ENCODE measurements at regions of chr5 and their contacts with region 1.

Region 1: GRCh38 chr5:149035372-149035790 is 27.5 kb downstream of the SH3TC2 start:
- DNase-seq: peak; percentile 83
- H3K4me3 Mint-ChIP-seq: no peak overlapping the region
- H3K27ac Mint-ChIP-seq: no peak overlapping the region
- H3K4me1 Mint-ChIP-seq: peaks cover 35% of the 10 kb centered on the region
- H3K27me3 Mint-ChIP-seq: no peaks in the 10 kb centered on the region

Region 2: DNA sequence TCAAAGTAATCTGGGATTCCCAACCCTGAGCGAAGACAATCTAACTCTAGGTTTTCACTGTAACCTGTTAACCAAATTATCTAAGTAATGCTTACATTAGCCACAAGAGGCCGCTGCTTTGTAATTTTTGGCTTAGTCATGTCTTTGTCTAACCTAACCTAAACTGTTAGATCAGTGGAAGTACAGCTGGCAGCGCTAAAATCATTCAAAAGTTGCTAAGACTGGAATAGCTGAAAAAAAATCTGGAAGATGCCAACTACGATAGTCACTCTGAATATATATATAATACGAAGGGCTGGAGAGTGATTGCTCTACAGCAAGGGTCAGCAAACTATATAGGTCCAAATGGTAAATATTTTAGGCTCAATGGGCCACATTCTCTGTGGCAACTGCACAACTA is 591.4 kb before region 1 on chr5:
- CTCF ChIA-PET with region 1: interaction called, 6 read pairs
- POLR2A ChIA-PET with region 1: no interaction called
- intact Hi-C with region 1: loop called (anchors 10 kb)
- DNase-seq: peak; percentile 27
- H3K4me3 Mint-ChIP-seq: no peak overlapping the region
- H3K27ac Mint-ChIP-seq: no peak overlapping the region
- H3K4me1 Mint-ChIP-seq: no peaks in the 10 kb centered on the region
- H3K27me3 Mint-ChIP-seq: no peaks in the 10 kb centered on the region

Region 3: DNA sequence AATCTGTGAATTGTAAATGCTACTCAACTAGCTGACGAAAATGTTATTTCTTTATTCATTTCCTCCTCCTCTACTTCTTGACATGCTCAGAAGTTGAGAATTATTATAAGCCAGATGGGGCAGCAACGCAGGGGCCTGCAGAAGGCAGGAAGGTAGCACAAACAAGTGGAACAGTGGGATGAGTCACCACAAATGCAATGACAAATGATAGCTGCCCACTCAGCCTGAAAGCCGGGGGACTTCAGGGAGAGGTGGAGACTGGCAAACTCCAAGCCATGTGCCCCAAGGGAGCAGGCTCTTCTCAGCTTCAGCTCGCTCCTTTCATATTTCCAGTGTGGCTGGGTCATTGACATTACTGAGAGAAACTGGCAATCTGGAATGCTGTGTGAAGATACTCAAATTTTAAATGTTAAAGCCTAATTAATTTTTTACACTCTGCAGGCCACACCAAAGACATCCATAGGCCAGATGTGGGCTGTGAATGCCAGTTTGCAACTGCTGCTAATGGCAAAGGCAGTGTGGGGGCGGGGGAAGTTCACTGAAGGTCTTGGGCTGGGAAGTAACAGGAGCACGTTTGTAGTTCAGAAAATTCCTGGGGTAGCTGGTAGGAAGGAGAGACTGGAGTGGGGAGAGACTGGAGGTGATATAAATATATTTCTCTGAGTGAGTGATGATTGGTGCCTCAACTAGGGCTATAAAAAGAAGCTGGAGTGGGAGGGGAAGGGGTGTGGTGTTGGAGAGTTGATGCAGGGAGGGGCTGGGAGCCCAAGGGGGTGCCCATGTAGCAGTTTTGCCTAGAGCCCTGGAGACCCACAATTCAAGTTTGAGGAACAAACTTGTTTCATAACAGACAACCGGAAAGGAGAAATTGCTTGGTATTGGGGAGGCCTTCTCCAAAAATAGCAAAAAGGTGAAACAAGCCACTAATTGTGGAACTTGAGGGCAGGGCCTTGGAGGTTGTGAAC is 229.8 kb before region 1 on chr5:
- CTCF ChIA-PET with region 1: no interaction called
- POLR2A ChIA-PET with region 1: no interaction called
- intact Hi-C with region 1: loop called (anchors 5 kb)
- DNase-seq: peak; percentile 70
- H3K4me3 Mint-ChIP-seq: no peak overlapping the region
- H3K27ac Mint-ChIP-seq: peak overlapping the region; percentile 16
- H3K4me1 Mint-ChIP-seq: peaks cover 62% of the 10 kb centered on the region
- H3K27me3 Mint-ChIP-seq: peaks cover 15% of the 10 kb centered on the region

Region 4: GRCh38 chr5:148957591-148958202 is 77.7 kb before region 1 on chr5:
- CTCF ChIA-PET with region 1: interaction called, 52 read pairs
- POLR2A ChIA-PET with region 1: no interaction called
- intact Hi-C with region 1: loop called (anchors 2 kb)
- DNase-seq: peak; percentile 60
- H3K4me3 Mint-ChIP-seq: no peak overlapping the region
- H3K27ac Mint-ChIP-seq: no peak overlapping the region
- H3K4me1 Mint-ChIP-seq: no peaks in the 10 kb centered on the region
- H3K27me3 Mint-ChIP-seq: peaks cover 2% of the 10 kb centered on the region

Region 5: GRCh38 chr5:149024477-149024876 is 10.9 kb before region 1 on chr5:
- CTCF ChIA-PET with region 1: interaction called, 16 read pairs
- POLR2A ChIA-PET with region 1: no interaction called
- intact Hi-C with region 1: no loop called
- DNase-seq: no peak
- H3K4me3 Mint-ChIP-seq: no peak overlapping the region
- H3K27ac Mint-ChIP-seq: no peak overlapping the region
- H3K4me1 Mint-ChIP-seq: peaks cover 2% of the 10 kb centered on the region
- H3K27me3 Mint-ChIP-seq: peaks cover 3% of the 10 kb centered on the region

Region 6: DNA sequence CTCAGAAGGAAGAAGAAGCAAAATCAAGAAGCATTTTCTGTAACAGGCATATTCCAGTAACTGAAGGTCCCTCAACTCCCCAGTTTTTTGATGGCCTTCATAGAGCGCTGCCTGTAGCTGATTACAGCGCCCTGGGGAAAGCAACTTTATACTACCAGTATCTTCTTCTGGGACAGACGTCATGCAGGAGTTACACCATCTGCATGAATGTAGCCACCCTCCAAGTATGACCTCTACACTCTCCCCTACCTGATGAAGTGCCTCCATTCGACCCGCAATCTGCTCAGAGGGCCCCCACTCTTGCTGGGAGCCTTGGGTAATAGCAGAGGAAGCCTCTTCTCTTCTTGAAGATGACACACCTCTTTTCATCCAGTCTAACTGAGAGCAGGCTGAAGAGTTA is 48.5 kb after region 1 on chr5:
- CTCF ChIA-PET with region 1: no interaction called
- POLR2A ChIA-PET with region 1: no interaction called
- intact Hi-C with region 1: no loop called
- DNase-seq: no peak
- H3K4me3 Mint-ChIP-seq: no peak overlapping the region
- H3K27ac Mint-ChIP-seq: no peak overlapping the region
- H3K4me1 Mint-ChIP-seq: peaks cover 11% of the 10 kb centered on the region
- H3K27me3 Mint-ChIP-seq: peaks cover 2% of the 10 kb centered on the region

Region 7: GRCh38 chr5:149114403-149115312 is 79.3 kb after region 1 on chr5:
- CTCF ChIA-PET with region 1: interaction called, 30 read pairs
- POLR2A ChIA-PET with region 1: no interaction called
- intact Hi-C with region 1: loop called (anchors 2 kb)
- DNase-seq: peak; percentile 56
- H3K4me3 Mint-ChIP-seq: no peak overlapping the region
- H3K27ac Mint-ChIP-seq: no peak overlapping the region
- H3K4me1 Mint-ChIP-seq: no peaks in the 10 kb centered on the region
- H3K27me3 Mint-ChIP-seq: peaks cover 17% of the 10 kb centered on the region

Measured in activated CD4-positive, alpha-beta memory T cell treated with anti-CD3 and anti-CD28 coated beads for 36 hours (primary cell).